Calu3 (cell line): ENCODE measurements at regions of chr13 and their contacts with region 1.

Region 1: GRCh38 chr13:51590971-51591627 is 6.8 kb downstream of the WDFY2 start:
- DNase-seq: no peak
- H3K4me3 Mint-ChIP-seq: peak overlapping the region; percentile 43
- H3K27ac Mint-ChIP-seq: peak overlapping the region; percentile 33
- H3K4me1 Mint-ChIP-seq: peaks cover 13% of the 10 kb centered on the region
- H3K27me3 Mint-ChIP-seq: no peaks in the 10 kb centered on the region
- CTCF ChIP-seq: no peak

Region 2: GRCh38 chr13:50766013-50766412 is 825.1 kb before region 1 on chr13:
- CTCF ChIA-PET with region 1: no interaction called
- intact Hi-C with region 1: no loop called
- DNase-seq: no peak
- H3K4me3 Mint-ChIP-seq: no peak overlapping the region
- H3K27ac Mint-ChIP-seq: no peak overlapping the region
- H3K4me1 Mint-ChIP-seq: no peaks in the 10 kb centered on the region
- H3K27me3 Mint-ChIP-seq: peaks cover 21% of the 10 kb centered on the region
- CTCF ChIP-seq: no peak

Region 3: DNA sequence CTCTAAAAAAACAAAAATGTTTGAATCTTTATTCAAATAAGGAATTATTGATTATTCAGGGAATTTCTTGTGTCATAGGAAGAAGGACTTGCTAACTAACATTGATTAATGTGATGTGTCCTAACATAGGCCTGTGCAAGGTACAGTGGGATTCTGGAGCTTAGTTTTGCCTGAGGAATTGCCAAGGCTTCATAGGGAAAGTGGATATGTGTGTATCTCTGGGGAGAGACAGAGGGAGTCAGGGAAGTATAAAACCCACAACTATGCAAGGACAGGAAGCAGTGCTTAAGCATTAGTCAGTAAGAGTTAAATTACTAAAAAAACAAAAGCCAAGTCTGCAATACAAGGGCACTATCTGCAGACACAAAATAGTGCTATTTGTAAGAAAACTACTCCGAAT is 52.8 kb after region 1 on chr13:
- CTCF ChIA-PET with region 1: no interaction called
- intact Hi-C with region 1: loop called (anchors 5 kb)
- DNase-seq: no peak
- H3K4me3 Mint-ChIP-seq: peak overlapping the region; percentile 33
- H3K27ac Mint-ChIP-seq: peak overlapping the region; percentile 91
- H3K4me1 Mint-ChIP-seq: peaks cover 35% of the 10 kb centered on the region
- H3K27me3 Mint-ChIP-seq: no peaks in the 10 kb centered on the region
- CTCF ChIP-seq: no peak

Region 4: GRCh38 chr13:51689663-51689996 is 98.5 kb after region 1 on chr13:
- CTCF ChIA-PET with region 1: no interaction called
- intact Hi-C with region 1: loop called (anchors 5 kb)
- DNase-seq: peak; percentile 15
- H3K4me3 Mint-ChIP-seq: peak overlapping the region; percentile 52
- H3K27ac Mint-ChIP-seq: peak overlapping the region; percentile 9
- H3K4me1 Mint-ChIP-seq: peaks cover 25% of the 10 kb centered on the region
- H3K27me3 Mint-ChIP-seq: no peaks in the 10 kb centered on the region
- CTCF ChIP-seq: no peak

Region 5: GRCh38 chr13:52026246-52026626 is 435.1 kb after region 1 on chr13:
- CTCF ChIA-PET with region 1: no interaction called
- intact Hi-C with region 1: no loop called
- DNase-seq: no peak
- H3K4me3 Mint-ChIP-seq: no peak overlapping the region
- H3K27ac Mint-ChIP-seq: no peak overlapping the region
- H3K4me1 Mint-ChIP-seq: no peaks in the 10 kb centered on the region
- H3K27me3 Mint-ChIP-seq: no peaks in the 10 kb centered on the region
- CTCF ChIP-seq: no peak